Activated T-helper 1 cell treated with anti-CD3 and anti-CD28 coated beads, Interleukin-12 subunit alpha, Interleukin-12 subunit beta, Interleukin-2, Interleukin-4 antibody, amounts not matched to agents 30 ng/mL and 10 ng/mL and 1 ng/mL, durations not matched to agents 14 hours and 24 hours and 36 hours (primary cell): ENCODE measurements at regions of chr18 and their contacts with region 1.

Region 1: DNA sequence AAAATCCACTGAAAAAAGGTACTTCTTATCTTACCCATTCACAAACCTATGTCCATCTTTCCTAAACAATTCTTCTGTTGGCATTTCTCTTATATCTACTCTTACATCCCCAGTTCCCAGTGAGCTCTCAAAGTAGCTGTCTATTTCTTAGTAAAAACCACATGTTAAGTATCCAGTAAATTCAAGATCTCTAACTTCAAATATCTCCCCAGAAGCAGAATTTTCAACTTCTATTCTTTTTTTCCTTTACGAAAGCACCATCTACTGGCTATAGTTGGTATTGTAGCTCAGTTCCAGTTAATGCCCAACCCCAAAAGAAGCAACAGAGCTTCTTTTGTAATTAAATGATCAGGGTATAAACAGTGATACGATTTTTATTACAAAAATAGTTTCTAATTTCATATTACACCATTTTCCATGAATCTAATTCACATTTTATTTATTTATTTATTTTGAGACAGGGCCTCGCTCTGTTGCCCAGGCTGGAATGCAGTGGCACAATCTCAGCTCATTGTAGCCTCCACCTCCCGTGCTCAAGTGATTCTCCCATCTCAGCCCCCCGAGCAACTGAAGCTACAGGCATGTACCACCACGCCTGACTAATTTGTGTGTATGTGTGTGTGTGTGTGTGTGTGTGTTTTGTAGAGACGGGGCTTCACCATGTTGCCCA is 28.5 kb downstream of the HRH4 start:
- DNase-seq: no peak
- H3K4me3 Mint-ChIP-seq: no peak overlapping the region
- H3K27ac Mint-ChIP-seq: no peak overlapping the region
- H3K4me1 Mint-ChIP-seq: peaks cover 13% of the 10 kb centered on the region
- H3K27me3 Mint-ChIP-seq: peaks cover 9% of the 10 kb centered on the region

Region 2: GRCh38 chr18:24176727-24177416 is 312.1 kb before region 1 on chr18:
- intact Hi-C with region 1: loop called (anchors 5 kb)
- DNase-seq: no peak
- H3K4me3 Mint-ChIP-seq: no peak overlapping the region
- H3K27ac Mint-ChIP-seq: no peak overlapping the region
- H3K4me1 Mint-ChIP-seq: peaks cover 10% of the 10 kb centered on the region
- H3K27me3 Mint-ChIP-seq: no peaks in the 10 kb centered on the region

Region 3: DNA sequence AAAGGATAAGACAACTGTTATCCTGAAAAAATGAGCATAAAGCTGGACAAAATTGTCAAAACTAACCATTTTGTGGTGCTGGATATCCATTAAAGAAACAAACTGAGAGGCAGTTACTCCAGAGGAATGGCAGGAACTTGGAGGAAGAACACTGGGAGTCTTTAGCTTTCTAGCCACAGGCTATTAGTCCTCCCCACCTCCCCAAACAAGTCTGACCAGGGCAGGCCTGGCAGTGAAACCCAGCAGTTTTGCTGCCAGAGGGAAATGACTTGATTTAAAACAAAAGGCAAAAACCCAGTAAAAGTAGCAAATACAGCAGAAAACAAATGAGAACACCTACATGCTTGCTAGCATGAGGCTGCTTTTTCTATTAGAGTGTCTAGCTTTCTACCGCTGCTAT is 126.2 kb before region 1 on chr18:
- intact Hi-C with region 1: loop called (anchors 1 kb)
- DNase-seq: no peak
- H3K4me3 Mint-ChIP-seq: no peak overlapping the region
- H3K27ac Mint-ChIP-seq: no peak overlapping the region
- H3K4me1 Mint-ChIP-seq: no peaks in the 10 kb centered on the region
- H3K27me3 Mint-ChIP-seq: peaks cover 3% of the 10 kb centered on the region

Region 4: GRCh38 chr18:24432618-24433017 is 56.3 kb before region 1 on chr18:
- intact Hi-C with region 1: loop called (anchors 5 kb)
- DNase-seq: no peak
- H3K4me3 Mint-ChIP-seq: no peak overlapping the region
- H3K27ac Mint-ChIP-seq: no peak overlapping the region
- H3K4me1 Mint-ChIP-seq: peaks cover 8% of the 10 kb centered on the region
- H3K27me3 Mint-ChIP-seq: no peaks in the 10 kb centered on the region

Region 5: DNA sequence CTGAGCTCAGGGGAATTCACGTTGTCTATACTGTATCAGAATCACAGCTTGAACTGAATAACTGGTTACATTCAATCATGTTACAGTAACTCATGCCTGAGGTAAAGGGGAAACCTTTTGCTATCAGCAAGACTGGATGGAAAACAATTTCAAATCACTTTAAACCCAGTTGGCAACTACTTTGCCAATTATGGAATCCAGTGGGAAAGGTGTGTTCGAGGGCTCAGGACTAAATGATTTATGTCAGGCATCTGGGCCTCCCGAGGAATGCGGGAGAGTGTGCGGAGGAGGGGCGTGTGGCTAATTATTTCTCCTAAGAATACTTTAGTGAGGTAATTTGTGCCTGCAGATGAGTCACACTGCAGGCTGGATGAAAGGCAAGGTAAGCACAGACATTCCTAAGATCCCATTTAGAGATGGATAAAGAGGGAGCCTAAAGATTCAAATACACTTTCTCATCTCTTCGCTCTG is 71.6 kb after region 1 on chr18:
- intact Hi-C with region 1: no loop called
- DNase-seq: no peak
- H3K4me3 Mint-ChIP-seq: no peak overlapping the region
- H3K27ac Mint-ChIP-seq: no peak overlapping the region
- H3K4me1 Mint-ChIP-seq: no peaks in the 10 kb centered on the region
- H3K27me3 Mint-ChIP-seq: peaks cover 12% of the 10 kb centered on the region